ENCODE measurements at regions of chr3 and their contacts with region 1.

Region 1: GRCh38 chr3:101849051-101849720 is at the start of gene NFKBIZ:
- DNase-seq: peak; percentile 93
- H3K4me3 Mint-ChIP-seq: peak within 1 kb of the TSS; percentile 94
- H3K27ac Mint-ChIP-seq: peak within 1 kb of the TSS; percentile 99
- H3K4me1 Mint-ChIP-seq: peaks cover 35% of the 10 kb centered on the region
- H3K27me3 Mint-ChIP-seq: no peaks in the 10 kb centered on the region
- CTCF ChIP-seq: no peak
- total RNA-seq, gene NFKBIZ: 48.9 and 58.8 TPM in 2 replicates

Region 2: DNA sequence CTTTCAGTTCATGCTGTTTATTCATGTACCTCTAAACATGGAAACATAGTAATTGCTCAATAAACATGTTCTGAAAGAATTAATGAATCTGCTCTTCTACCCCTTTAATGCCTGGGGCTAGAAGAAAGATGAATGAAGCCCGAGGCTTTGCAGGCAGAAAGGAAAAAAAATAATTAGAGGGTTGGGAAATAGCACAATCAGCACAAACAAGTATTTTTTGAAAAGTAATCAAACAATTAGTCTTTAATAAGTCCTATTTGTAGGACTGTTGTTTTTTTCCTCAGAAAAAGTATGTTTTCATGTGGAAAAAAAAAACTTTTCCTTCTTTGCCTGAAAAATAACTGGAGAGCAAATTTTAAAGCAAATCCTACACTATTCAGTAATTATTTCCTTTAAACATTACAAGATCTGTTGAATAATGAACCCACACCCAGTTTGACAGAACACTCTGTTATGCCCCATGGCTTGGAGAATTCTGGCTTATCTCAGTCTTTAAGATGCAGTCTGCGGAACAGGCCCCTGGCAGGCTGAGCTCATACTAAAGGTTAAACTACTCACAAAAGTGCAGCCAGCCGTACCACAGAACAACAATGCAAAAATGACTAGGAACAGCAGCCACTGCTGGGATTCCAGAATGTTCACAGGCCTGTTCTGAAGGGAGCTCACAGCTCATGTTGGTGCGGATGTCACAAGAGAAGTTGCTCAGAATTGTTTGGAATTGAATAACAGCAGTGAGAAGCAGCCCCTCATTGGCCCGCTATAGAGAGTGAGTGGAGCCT is 935.1 kb before region 1 on chr3:
- CTCF ChIA-PET with region 1: no interaction called
- POLR2A ChIA-PET with region 1: no interaction called
- intact Hi-C with region 1: no loop called
- DNase-seq: no peak
- H3K4me3 Mint-ChIP-seq: no peak overlapping the region
- H3K27ac Mint-ChIP-seq: no peak overlapping the region
- H3K4me1 Mint-ChIP-seq: no peaks in the 10 kb centered on the region
- H3K27me3 Mint-ChIP-seq: no peaks in the 10 kb centered on the region
- CTCF ChIP-seq: no peak

Region 3: GRCh38 chr3:101809178-101810021 is 39.8 kb before region 1 on chr3:
- CTCF ChIA-PET with region 1: interaction called, 9 read pairs
- POLR2A ChIA-PET with region 1: interaction called, 11 read pairs
- intact Hi-C with region 1: loop called (anchors 5 kb)
- DNase-seq: peak; percentile 46
- H3K4me3 Mint-ChIP-seq: no peak overlapping the region
- H3K27ac Mint-ChIP-seq: no peak overlapping the region
- H3K4me1 Mint-ChIP-seq: peaks cover 10% of the 10 kb centered on the region
- H3K27me3 Mint-ChIP-seq: no peaks in the 10 kb centered on the region
- CTCF ChIP-seq: peak; percentile 64

Region 4: GRCh38 chr3:101827211-101828174 is 21.7 kb before region 1 on chr3:
- CTCF ChIA-PET with region 1: interaction called, 10 read pairs
- POLR2A ChIA-PET with region 1: interaction called, 121 read pairs
- intact Hi-C with region 1: loop called (anchors 2 kb)
- DNase-seq: peak; percentile 81
- H3K4me3 Mint-ChIP-seq: peak overlapping the region; percentile 88
- H3K27ac Mint-ChIP-seq: peak overlapping the region; percentile 87
- H3K4me1 Mint-ChIP-seq: peaks cover 25% of the 10 kb centered on the region
- H3K27me3 Mint-ChIP-seq: no peaks in the 10 kb centered on the region
- CTCF ChIP-seq: no peak

Region 5: GRCh38 chr3:101868534-101869464 is 19.6 kb after region 1 on chr3:
- CTCF ChIA-PET with region 1: interaction called, 7 read pairs
- POLR2A ChIA-PET with region 1: interaction called, 15 read pairs
- intact Hi-C with region 1: no loop called
- DNase-seq: peak; percentile 80
- H3K4me3 Mint-ChIP-seq: no peak overlapping the region
- H3K27ac Mint-ChIP-seq: no peak overlapping the region
- H3K4me1 Mint-ChIP-seq: peaks cover 13% of the 10 kb centered on the region
- H3K27me3 Mint-ChIP-seq: no peaks in the 10 kb centered on the region
- CTCF ChIP-seq: no peak

Region 6: DNA sequence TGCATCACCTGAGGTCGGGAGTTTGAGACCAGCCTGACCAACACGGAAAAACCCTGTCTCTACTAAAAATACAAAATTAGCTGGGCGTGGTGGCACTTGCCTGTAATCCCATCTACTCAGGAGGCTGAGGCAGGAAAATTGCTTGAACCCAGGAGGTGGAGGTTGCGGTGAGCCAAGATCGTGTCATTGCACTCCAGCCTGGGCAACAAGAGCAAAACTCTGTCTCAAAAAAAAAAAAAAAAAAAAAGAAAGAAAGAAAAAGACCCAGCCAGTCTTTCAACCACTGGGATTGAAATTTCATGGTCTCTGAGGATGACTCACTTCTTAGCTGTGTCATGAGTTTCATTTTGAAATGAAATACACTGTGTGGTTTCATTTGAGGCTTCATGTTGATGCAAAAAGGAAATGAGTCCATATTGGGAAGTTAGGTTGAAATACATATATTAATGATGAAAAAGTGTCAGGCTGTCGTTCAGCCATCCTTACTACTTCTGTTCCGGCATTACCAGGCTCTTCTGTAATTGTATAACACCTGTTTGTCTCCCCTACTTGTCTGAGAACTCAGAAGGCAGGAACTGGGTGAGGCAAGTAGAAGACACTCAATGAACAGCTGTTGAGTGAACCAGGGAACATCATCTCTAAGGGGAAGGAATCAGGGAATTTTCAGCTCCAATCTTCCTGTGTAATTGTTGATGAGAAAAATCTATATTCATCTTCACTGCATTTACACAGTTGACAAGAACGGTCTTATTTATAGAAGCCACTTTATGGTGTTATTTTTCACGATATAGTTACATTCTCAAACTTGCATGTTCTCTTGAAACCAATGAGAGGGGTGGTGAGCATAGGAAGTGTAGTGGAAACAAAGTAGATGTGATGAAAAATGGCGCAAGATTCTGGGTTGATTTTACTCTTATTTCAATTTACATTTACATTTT is 87.5 kb after region 1 on chr3:
- CTCF ChIA-PET with region 1: interaction called, 3 read pairs
- POLR2A ChIA-PET with region 1: interaction called, 17 read pairs
- intact Hi-C with region 1: no loop called
- DNase-seq: peak; percentile 84
- H3K4me3 Mint-ChIP-seq: no peak overlapping the region
- H3K27ac Mint-ChIP-seq: peak overlapping the region; percentile 88
- H3K4me1 Mint-ChIP-seq: peaks cover 5% of the 10 kb centered on the region
- H3K27me3 Mint-ChIP-seq: no peaks in the 10 kb centered on the region
- CTCF ChIP-seq: no peak

Region 7: DNA sequence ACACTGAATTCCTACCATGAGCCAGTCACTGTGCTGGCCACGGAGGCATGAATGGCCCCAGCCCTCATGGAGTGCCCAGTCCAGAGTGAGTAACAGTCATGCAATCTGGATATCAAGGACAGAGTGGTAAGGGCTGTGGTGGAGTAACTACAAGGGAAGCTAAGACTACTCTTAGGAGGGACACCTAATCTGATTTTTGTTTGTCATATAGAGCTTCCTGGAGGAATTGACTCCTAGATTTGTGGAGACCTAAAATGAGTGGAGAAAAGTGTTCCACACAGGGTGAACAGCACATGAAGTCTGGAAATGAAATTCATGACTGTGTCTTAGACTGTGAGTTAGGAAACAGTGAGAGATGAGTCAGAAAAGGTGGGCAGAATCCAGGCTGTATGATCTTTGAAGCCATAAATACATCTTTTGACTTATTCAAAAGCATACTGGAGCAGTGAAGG is 220.1 kb after region 1 on chr3:
- CTCF ChIA-PET with region 1: no interaction called
- POLR2A ChIA-PET with region 1: interaction called, 3 read pairs
- intact Hi-C with region 1: loop called (anchors 10 kb)
- DNase-seq: peak; percentile 76
- H3K4me3 Mint-ChIP-seq: no peak overlapping the region
- H3K27ac Mint-ChIP-seq: peak overlapping the region; percentile 68
- H3K4me1 Mint-ChIP-seq: peaks cover 28% of the 10 kb centered on the region
- H3K27me3 Mint-ChIP-seq: no peaks in the 10 kb centered on the region
- CTCF ChIP-seq: no peak

Region 8: GRCh38 chr3:102129760-102130608 is 280.8 kb after region 1 on chr3:
- CTCF ChIA-PET with region 1: no interaction called
- POLR2A ChIA-PET with region 1: interaction called, 20 read pairs
- intact Hi-C with region 1: no loop called
- DNase-seq: peak; percentile 83
- H3K4me3 Mint-ChIP-seq: peak overlapping the region; percentile 43
- H3K27ac Mint-ChIP-seq: peak overlapping the region; percentile 83
- H3K4me1 Mint-ChIP-seq: peaks cover 43% of the 10 kb centered on the region
- H3K27me3 Mint-ChIP-seq: no peaks in the 10 kb centered on the region
- CTCF ChIP-seq: no peak